Posterior cingulate gyrus (tissue), 11 donors: ENCODE measurements at regions of chr12 and their contacts with region 1.

Region 1: GRCh38 chr12:57771708-57772428 is at the start of gene METTL1:
- DNase-seq: peak; percentile 92 to 99 (median 96)

Region 2: GRCh38 chr12:57740656-57741412 is 31.0 kb before region 1 on chr12:
- intact Hi-C with region 1: no loop called
- DNase-seq: peak in 2 of 10 donors; percentile 63 to 93

Region 3: DNA sequence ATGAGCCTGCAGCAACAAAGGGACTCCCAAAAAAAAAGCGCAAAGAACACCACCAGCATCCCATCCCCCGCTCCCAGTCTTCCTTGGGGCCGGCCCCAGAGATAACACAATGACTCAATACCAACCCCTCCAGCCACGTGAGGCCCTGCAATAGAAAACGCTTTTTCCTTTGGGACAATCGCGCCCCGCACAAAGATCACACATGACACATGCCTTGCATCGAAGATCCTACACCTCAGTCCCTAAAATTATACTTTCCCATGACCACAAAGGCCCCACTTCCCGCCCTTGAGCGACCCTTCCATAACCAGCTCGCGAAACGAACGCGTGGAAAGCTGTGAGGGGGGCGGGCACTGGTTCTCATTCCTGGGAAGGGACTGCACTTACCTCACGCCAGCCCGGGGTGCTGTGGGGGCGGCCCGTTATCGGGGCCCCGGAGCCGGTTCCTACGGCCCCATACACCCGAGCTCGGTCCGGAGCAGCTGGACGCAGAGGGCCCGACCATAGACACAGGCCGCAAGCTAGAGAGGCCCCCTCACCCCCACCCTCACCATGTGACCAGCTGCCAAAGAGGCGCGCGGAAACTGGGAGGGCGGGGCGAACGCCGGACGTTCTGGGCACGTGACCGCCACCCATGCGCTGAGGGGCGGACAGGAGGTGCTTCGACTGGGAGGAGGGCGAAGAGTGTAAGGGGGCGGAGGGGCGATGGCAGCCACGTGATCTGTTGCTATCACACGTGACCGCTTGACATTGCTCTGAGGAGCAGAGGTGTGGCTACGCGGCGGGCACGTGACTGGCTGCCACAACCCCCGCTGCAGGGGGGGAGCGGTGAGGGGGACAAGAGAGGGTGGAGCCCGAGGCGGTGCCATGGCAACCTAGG is 19.8 kb before region 1 on chr12 and contains the start of gene CDK4:
- intact Hi-C with region 1: loop called (anchors 1 kb)
- DNase-seq: peak; percentile 100

Region 4: GRCh38 chr12:57782608-57783465 is 11.0 kb after region 1 on chr12 and contains the start of gene TSFM:
- intact Hi-C with region 1: loop called (anchors 1 kb)
- DNase-seq: peak; percentile 95 to 99 (median 98)